ENCODE measurements at regions of chrX and their contacts with region 1.

Region 1: GRCh38 chrX:50100188-50100587 is 100.6 kb downstream of the AKAP4 start:
- DNase-seq: peak in 2 of 9 experiments; percentile 14 to 19
- ATAC-seq: no peak
- H3K4me3 ChIP-seq: no peak overlapping the region
- H3K4me3 Mint-ChIP-seq: no peak overlapping the region
- H3K27ac ChIP-seq: no peak overlapping the region
- H3K27ac Mint-ChIP-seq: no peak overlapping the region
- H3K4me1 ChIP-seq: no peaks in the 10 kb centered on the region
- H3K4me1 Mint-ChIP-seq: no peaks in the 10 kb centered on the region
- H3K27me3 ChIP-seq: no peaks in the 10 kb centered on the region
- H3K27me3 Mint-ChIP-seq: no peaks in the 10 kb centered on the region
- CTCF ChIP-seq: no peak

Region 2: DNA sequence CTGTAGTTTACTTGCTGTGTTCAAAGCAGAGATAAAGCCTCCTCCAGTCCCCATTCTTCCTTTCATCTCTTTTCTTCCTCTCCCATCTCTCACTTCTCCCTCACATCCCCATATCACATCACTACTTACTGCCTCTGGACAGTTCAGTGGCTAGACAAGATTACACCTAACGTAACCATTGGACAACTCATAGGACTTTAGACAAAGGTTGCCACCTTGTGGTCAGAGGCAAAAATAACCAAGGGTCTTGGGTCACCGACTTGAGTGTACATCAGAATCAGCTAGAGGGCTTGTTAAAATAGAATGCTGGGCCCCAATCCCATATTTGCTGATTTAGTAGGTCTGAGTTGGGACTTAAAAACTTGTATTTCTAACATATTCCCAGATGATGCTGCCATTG is 479.8 kb after region 1 on chrX:
- CTCF ChIA-PET with region 1: interaction called, 8 read pairs
- POLR2A ChIA-PET with region 1: no interaction called
- intact Hi-C with region 1: loop called in 1 of 2 experiments (anchors 5 kb)
- DNase-seq: peak in 6 of 9 experiments; percentile 4 to 59 (median 22)
- ATAC-seq: no peak
- H3K4me3 ChIP-seq: no peak overlapping the region
- H3K4me3 Mint-ChIP-seq: no peak overlapping the region
- H3K27ac ChIP-seq: no peak overlapping the region
- H3K27ac Mint-ChIP-seq: no peak overlapping the region
- H3K4me1 ChIP-seq: no peaks in the 10 kb centered on the region
- H3K4me1 Mint-ChIP-seq: no peaks in the 10 kb centered on the region
- H3K27me3 ChIP-seq: no peaks in the 10 kb centered on the region
- H3K27me3 Mint-ChIP-seq: peaks cover 9% of the 10 kb centered on the region
- CTCF ChIP-seq: peak; percentile 46

Region 3: DNA sequence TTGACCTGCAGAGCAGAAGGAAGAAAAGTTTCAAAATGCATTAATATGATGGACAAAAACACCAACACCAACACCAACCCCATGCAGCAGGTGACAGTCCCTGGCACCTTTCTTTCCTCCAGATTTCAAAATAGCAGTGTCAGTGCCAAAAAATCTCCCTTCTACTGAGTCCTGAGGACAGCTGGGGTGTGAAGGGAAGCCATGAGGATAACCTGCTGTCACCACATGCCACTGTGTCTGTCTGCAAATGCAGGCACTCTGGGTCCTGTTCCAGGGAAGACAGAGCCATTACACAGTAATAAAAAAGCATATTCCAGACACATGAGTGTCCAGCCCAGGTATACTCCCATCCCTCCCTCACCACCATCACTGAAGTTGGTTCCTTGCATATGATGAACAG is 997.9 kb after region 1 on chrX:
- CTCF ChIA-PET with region 1: no interaction called
- POLR2A ChIA-PET with region 1: no interaction called
- intact Hi-C with region 1: loop called in 1 of 2 experiments (anchors 10 kb)
- DNase-seq: no peak
- ATAC-seq: no peak
- H3K4me3 ChIP-seq: no peak overlapping the region
- H3K4me3 Mint-ChIP-seq: no peak overlapping the region
- H3K27ac ChIP-seq: no peak overlapping the region
- H3K27ac Mint-ChIP-seq: no peak overlapping the region
- H3K4me1 ChIP-seq: no peaks in the 10 kb centered on the region
- H3K4me1 Mint-ChIP-seq: no peaks in the 10 kb centered on the region
- H3K27me3 ChIP-seq: no peaks in the 10 kb centered on the region
- H3K27me3 Mint-ChIP-seq: peaks cover 3% of the 10 kb centered on the region
- CTCF ChIP-seq: no peak

Measured in CD8-positive, alpha-beta T cell (primary cell).